ENCODE measurements at regions of chr2 and their contacts with region 1.

Region 1: DNA sequence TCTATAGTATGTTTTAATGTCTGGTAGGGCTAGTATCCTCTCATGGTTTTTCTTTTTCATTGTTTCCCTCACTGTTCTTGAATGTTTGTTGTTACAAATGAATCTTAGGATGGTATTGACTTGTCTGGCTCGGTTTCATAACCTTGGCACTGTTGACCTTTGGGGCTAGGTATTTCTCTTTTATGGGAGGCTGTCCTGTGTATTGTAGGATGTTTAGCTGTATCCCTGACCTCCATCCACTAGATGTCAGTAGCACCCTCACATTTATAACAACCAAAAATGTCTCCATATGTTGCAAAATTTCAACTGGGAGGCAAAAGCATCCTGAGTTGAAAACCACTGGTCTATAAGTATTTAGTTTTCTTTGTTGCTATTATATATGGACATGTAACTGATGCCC is 7.0 kb upstream of the AOX1 start:
- DNase-seq: peak; percentile 49
- H3K4me3 Mint-ChIP-seq: no peak overlapping the region
- H3K27ac Mint-ChIP-seq: peak overlapping the region; percentile 49
- H3K4me1 Mint-ChIP-seq: no peaks in the 10 kb centered on the region
- H3K27me3 Mint-ChIP-seq: no peaks in the 10 kb centered on the region
- CTCF ChIP-seq: peak; percentile 32

Region 2: GRCh38 chr2:200677721-200678585 is 99.2 kb after region 1 on chr2:
- CTCF ChIA-PET with region 1: interaction called, 3 read pairs
- POLR2A ChIA-PET with region 1: no interaction called
- intact Hi-C with region 1: loop called (anchors 10 kb)
- DNase-seq: peak; percentile 71
- H3K4me3 Mint-ChIP-seq: peak overlapping the region; percentile 19
- H3K27ac Mint-ChIP-seq: peak overlapping the region; percentile 82
- H3K4me1 Mint-ChIP-seq: peaks cover 17% of the 10 kb centered on the region
- H3K27me3 Mint-ChIP-seq: no peaks in the 10 kb centered on the region
- CTCF ChIP-seq: no peak

Measured in MCF 10A (cell line).